HCT116 (cell line): ENCODE measurements at regions of chr7 and their contacts with region 1.

Region 1: DNA sequence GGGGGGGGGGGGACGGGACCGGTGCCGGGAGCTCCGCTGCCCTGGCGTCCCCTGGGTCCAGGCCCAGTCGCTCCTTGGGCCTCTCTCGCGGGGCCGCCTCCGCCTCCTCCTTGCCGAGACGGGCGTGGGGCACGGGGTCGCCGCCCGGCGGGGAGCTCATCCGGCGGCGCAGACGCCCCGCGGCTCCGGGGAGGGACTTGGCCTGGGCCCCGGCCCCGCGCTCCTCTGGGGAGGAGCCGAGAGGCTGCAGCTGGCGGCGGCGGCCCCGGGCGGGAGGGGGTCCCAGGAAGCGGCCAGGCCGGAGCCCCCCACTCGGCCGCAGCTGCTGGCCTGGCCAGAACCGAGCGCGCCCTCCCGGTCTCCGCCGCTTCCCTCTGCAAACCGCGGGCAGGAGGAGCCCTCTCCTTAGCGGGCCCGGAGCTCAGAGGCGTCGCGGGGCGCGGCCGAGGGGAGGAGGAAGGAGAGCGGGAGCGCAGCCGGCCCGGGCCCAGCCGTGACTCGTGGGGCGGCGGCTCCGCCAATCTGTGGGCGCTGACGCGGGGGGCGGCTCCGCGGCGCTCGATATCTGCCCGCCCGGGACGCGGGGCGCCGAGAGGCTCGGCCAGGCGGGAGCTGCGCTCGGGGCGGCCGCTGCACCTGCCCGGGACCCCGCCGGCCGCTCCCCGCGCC is at the start of gene FAM20C:
- DNase-seq: peak; percentile 23
- ATAC-seq: peak; percentile 89
- H3K4me3 ChIP-seq: peak within 1 kb of the TSS; percentile 64 to 81
- H3K27ac ChIP-seq: peak within 1 kb of the TSS; percentile 76
- H3K4me1 ChIP-seq: peaks cover 10 to 21% of the 10 kb centered on the region in 2 experiments; a peak in 3 of 4 replicates
- H3K27me3 ChIP-seq: no peaks in the 10 kb centered on the region
- CTCF ChIP-seq: no peak
- POLR2A ChIP-seq: peak; percentile 62
- RAD21 ChIP-seq: no peak
- total RNA-seq, gene FAM20C: 27.1 TPM

Region 2: DNA sequence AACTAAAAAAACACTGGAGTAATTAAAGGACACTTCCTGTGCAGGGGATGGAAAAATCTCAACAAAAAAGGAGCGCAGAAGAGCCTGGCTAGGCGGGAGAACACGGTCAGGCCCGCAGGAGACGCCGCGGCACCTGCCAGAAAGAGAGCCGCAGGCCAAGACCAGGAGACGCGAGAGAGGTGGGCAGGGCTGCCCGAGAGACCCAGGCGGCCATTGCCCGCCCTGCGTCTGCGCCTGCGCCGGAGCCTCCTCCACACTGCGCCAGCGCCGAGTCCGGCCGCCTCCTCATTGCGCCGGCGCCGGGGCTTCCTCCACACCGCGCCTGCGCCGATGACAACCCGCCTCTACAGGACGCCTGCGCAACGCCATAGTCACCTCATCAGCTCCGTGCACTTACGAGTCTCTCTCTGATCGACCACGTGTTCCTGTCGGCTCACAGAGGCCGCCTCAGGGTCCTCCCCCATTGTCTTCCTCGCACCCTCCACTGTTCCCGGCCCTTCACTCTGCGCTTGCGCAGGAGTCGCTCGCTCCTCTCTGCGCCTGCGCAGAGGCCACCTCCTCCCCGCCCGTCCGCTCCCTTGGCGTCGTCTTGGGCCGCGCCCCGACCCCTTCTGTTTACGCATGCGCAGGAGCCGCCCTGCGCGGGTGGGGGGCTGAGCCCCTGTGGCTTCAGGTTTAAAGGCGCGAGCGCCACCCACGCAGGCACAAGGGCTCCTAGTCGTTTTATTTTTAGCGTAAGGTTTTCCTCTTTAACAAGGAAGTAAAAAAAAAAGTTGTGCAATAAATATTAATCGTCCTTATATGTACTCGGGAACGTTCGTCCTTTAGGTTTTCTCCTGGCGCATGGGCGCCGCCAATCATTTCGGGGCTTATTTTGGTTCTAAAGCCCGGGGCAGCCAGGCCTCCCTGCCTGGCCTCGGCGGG is 42.9 kb before region 1 on chr7:
- CTCF ChIA-PET with region 1: no interaction called
- POLR2A ChIA-PET with region 1: interaction called, 3 read pairs
- RAD21 ChIA-PET with region 1: no interaction called
- intact Hi-C with region 1: loop called (anchors 2 kb)
- DNase-seq: peak; percentile 96
- ATAC-seq: peak; percentile 96
- H3K4me3 ChIP-seq: peak overlapping the region; percentile 57 to 62
- H3K27ac ChIP-seq: peak overlapping the region; percentile 83
- H3K4me1 ChIP-seq: peaks cover 7 to 18% of the 10 kb centered on the region in 2 experiments
- H3K27me3 ChIP-seq: no peaks in the 10 kb centered on the region
- CTCF ChIP-seq: no peak
- POLR2A ChIP-seq: peak; percentile 87
- RAD21 ChIP-seq: no peak

Region 3: DNA sequence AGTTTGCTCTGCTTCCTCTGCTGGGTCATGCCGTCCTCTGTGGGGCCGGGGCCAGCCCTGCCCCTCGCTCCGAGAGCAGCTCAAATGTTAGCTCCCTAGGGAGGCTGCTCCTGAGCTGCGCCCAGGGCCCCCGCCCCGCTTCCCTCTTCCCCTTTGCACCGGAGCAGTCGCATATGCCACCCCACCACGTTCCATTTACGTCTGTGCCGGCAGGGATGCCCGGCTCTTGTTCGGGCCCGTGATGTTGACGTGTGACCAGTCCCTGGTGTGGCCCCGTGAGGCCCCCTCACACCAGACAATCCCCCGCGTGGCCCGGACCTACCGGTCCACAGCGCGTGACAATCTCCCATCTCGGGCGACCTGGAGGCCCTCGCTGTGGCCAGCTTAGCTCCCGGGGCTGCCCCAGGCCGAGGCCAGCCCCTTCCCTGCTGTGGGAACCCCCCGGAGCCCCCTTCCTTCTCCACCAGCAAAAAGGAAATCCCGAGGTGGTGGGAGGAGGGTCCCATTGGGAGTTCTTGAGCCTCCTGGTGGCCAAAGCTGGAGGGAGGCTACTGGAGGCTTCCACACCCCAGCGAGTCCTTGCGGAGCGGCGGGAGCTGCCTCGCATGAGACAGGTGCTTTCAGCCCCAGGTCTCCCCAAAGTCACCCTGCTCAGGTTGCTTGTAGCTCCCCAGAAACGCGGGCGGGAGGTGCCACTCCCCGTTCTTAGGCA is 15.5 kb after region 1 on chr7:
- CTCF ChIA-PET with region 1: no interaction called
- POLR2A ChIA-PET with region 1: no interaction called
- RAD21 ChIA-PET with region 1: no interaction called
- intact Hi-C with region 1: no loop called
- DNase-seq: no peak
- ATAC-seq: no peak
- H3K4me3 ChIP-seq: no peak overlapping the region
- H3K27ac ChIP-seq: no peak overlapping the region
- H3K4me1 ChIP-seq: no peaks in the 10 kb centered on the region
- H3K27me3 ChIP-seq: no peaks in the 10 kb centered on the region
- CTCF ChIP-seq: no peak
- POLR2A ChIP-seq: no peak
- RAD21 ChIP-seq: no peak

Region 4: GRCh38 chr7:1044191-1045068 is 852.3 kb after region 1 on chr7 and contains the start of gene GPR146:
- CTCF ChIA-PET with region 1: no interaction called
- POLR2A ChIA-PET with region 1: no interaction called
- RAD21 ChIA-PET with region 1: no interaction called
- intact Hi-C with region 1: no loop called
- DNase-seq: peak; percentile 86
- ATAC-seq: peak; percentile 98
- H3K4me3 ChIP-seq: peak within 1 kb of the TSS; percentile 54 to 61
- H3K27ac ChIP-seq: peak within 1 kb of the TSS; percentile 68
- H3K4me1 ChIP-seq: peaks cover 13 to 21% of the 10 kb centered on the region in 2 experiments
- H3K27me3 ChIP-seq: no peaks in the 10 kb centered on the region
- CTCF ChIP-seq: peak; percentile 26 to 63 (median 54); a peak in 5 of 6 replicates
- POLR2A ChIP-seq: peak; percentile 21
- RAD21 ChIP-seq: no peak; the same call in 1 of the 2 replicates
- total RNA-seq, gene GPR146: 2.4 TPM